IMR-90 (cell line): ENCODE measurements at regions of chr17 and their contacts with region 1.

Region 1: DNA sequence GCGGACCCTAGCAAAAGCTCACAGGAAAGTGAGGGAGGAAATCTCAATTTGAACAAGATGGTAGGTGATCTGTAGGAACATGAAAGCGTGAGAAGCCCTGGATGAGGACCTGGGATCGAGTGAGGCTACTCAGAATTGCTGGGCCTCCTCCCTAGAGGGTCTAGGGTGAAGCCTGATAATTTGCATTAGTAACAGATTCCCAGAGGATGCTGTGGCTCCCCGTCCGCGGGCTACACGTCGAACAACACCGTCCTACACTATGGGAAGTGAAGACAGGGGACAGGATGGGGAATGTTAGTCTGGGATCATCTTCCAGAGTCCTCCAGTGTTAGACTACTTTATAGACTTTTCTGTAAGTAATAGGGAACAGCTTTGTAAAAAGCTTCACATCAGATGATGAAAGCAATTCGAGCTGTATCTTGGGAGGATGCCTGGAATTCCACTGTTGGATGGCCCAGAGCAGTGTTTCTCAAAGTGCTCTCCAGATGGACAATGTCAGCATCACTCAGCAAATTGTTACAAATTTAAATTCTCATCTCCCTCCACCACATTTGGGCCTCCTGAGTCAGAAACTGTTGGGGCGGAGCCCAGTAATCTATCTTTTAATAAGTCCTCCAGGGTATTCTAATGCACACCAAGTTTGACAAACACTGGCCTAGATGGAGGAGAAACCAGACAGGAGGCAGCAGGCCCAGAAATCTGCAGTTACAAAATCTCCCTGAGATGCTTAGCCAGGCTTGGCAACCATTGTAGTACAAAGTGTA is 6.5 kb downstream of the FNDC8 start:
- DNase-seq: peak; percentile 94
- ATAC-seq: peak; percentile 84
- H3K4me3 ChIP-seq: no peak overlapping the region
- H3K27ac ChIP-seq: peak overlapping the region; percentile 97
- H3K4me1 ChIP-seq: peaks cover 36% of the 10 kb centered on the region
- H3K27me3 ChIP-seq: no peaks in the 10 kb centered on the region
- CTCF ChIP-seq: no peak
- POLR2A ChIP-seq: no peak
- RAD21 ChIP-seq: no peak

Region 2: DNA sequence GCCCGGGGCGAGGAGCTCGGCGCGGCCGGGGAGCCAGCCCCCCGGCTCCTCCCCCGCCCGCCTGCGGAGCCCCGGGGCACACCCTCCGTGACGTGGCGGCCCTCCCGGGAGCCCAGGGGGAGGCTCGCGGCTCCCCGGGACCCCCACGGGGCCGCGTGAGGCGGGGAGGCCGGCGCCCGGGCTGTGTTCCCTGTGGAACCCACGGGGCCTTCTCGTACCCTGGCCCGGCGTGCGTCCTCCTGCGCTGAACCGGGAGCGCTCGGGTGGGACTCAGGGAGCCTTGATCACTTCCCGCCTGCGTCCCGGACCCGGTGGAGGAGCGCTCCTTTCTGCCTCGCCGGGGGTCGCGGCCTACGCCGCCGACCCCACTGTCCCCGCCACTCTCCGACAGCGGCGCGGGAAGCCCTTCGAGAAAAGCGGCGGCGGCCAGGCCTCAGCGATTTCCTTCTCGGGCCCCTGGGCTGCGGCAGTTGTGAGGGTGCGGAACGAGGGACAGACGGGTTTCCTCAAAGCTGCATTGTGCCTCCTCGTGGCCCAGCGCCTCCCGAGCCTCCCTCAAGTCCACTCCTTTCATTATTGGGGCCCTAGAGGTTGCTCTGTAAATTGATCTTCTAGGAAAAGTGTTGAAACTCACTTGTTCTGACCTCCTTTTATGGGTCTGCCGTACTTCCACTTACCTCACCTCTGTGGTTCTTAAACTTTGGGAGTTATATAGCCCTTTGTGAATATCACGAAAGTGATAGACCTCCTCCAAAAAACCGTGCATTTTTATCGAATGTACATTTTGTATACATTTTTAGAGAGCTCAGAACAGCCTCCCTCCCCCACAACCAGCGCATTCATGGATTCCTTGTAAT is 147.0 kb before region 1 on chr17:
- CTCF ChIA-PET with region 1: no interaction called
- POLR2A ChIA-PET with region 1: no interaction called
- dilution Hi-C with region 1: no loop called
- in situ Hi-C with region 1: no loop called
- intact Hi-C with region 1: no loop called
- DNase-seq: peak; percentile 80
- ATAC-seq: peak; percentile 94
- H3K4me3 ChIP-seq: peak overlapping the region; percentile 91
- H3K27ac ChIP-seq: peak overlapping the region; percentile 96
- H3K4me1 ChIP-seq: peaks cover 7% of the 10 kb centered on the region
- H3K27me3 ChIP-seq: no peaks in the 10 kb centered on the region
- CTCF ChIP-seq: peak; percentile 50
- POLR2A ChIP-seq: peak; percentile 77
- RAD21 ChIP-seq: peak; percentile 36

Region 3: DNA sequence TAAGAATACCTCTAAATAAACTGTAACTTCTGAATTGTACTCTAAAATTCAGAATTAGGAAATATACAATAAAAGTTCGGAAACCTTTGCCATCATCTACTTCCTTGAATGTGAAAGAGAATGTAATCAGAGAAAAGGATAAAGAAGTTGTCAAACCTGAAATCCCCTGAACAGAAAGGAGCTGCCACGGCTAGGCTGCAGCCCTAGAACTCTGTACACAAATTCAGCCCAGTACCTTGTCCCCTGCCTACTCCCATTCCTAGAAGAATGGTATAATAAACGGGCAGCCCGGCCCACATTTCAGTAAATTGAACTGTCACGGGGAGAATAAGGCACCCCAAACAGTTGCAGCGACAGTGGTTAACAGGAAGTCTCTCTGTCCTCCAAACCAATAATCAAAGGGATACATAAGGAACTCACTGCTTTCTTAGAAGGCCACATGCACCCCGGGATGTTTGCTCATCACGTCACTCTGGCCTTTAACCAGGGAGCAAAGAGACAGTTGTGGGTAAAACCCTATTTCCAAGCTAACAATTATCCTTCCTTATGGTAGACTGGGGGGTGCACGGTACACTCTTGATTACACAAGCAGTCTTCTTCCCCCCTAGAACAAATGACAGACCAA is 40.1 kb before region 1 on chr17:
- CTCF ChIA-PET with region 1: no interaction called
- POLR2A ChIA-PET with region 1: no interaction called
- dilution Hi-C with region 1: no loop called
- in situ Hi-C with region 1: no loop called
- intact Hi-C with region 1: no loop called
- DNase-seq: peak; percentile 22
- ATAC-seq: peak; percentile 1; the same call in 1 of the 2 replicates
- H3K4me3 ChIP-seq: peak overlapping the region; percentile 87
- H3K27ac ChIP-seq: peak overlapping the region; percentile 73
- H3K4me1 ChIP-seq: peaks cover 11% of the 10 kb centered on the region
- H3K27me3 ChIP-seq: no peaks in the 10 kb centered on the region
- CTCF ChIP-seq: no peak
- POLR2A ChIP-seq: no peak
- RAD21 ChIP-seq: no peak

Region 4: GRCh38 chr17:35254107-35254802 is 126.3 kb after region 1 on chr17:
- CTCF ChIA-PET with region 1: no interaction called
- POLR2A ChIA-PET with region 1: no interaction called
- dilution Hi-C with region 1: no loop called
- in situ Hi-C with region 1: no loop called
- intact Hi-C with region 1: loop called (anchors 1 kb)
- DNase-seq: peak; percentile 97
- ATAC-seq: peak; percentile 80
- H3K4me3 ChIP-seq: no peak overlapping the region
- H3K27ac ChIP-seq: peak overlapping the region; percentile 58; the same call in 1 of the 2 replicates
- H3K4me1 ChIP-seq: peaks cover 16% of the 10 kb centered on the region
- H3K27me3 ChIP-seq: no peaks in the 10 kb centered on the region
- CTCF ChIP-seq: no peak
- POLR2A ChIP-seq: no peak
- RAD21 ChIP-seq: no peak; the same call in 1 of the 2 replicates